Adrenal gland (tissue), 19 donors: ENCODE measurements at regions of chr13 and their contacts with region 1.

Region 1: DNA sequence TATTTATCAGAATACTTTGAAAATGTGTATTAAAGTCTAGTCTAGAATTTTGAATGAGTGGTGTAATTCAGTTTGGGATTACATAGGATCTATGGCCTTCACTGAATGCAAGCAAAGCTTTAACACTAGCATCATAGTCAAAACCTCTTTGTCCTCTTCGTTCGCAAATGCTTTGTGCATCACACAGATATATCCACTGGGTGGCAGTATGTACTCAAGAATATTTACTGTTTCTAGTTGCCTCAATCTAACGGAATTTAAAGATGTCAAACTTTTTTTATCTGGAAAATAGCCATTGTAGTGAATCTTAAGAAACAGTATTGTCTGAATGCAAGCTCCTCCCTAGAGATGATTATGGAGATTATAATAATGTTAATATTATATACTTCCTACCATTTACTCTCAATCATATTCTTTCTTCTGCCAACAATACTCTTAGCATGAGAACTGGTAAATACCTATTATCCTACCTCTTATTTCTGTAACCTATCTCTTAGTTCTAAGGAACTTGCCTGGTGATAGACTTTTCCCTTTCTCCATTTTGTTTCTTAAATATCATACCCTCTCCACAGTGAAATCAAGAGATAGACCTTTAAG is 25.8 kb downstream of the LACC1 start:
- DNase-seq: peak in 4 of 7 donors; percentile 17 to 43 (median 34)
- H3K4me3 ChIP-seq: no peak overlapping the region
- H3K27ac ChIP-seq: no peak overlapping the region
- H3K4me1 ChIP-seq: peaks cover 0 to 5% of the 10 kb centered on the region in 2 donors
- H3K27me3 ChIP-seq: no peaks in the 10 kb centered on the region
- CTCF ChIP-seq: peak; percentile 53 to 91 (median 86)
- POLR2A ChIP-seq: no peak

Region 2: DNA sequence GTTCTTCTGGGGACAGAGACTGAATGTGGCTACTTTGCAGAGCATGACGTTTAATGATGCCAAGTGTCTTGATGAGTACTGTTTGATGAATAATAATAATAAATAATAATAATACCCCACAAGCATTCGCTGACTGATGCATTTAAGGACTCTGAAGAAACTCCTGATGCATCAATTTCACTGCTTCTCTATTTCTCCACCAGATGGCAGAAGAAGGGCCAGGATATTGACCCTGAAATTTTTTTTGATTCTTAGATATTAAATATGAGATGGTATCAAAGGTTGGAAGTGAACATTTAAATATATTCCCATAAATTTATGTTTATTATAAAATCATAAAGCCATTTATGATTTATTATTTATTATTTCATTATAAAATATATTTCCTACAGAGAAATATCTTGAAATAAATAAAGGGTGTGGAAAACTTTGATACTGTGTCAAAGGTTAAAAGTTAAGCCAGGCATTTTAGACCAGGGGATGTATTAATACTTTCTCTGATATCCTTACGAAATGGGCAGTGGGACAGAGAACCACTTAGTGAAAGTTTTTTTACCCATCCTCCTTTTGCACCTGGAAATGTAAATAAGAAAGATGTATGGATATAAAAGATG is 145.0 kb after region 1 on chr13:
- intact Hi-C with region 1: loop called in 1 of 2 experiments (anchors 5 kb)
- DNase-seq: peak in 1 of 7 donors; percentile 11
- H3K4me3 ChIP-seq: no peak overlapping the region
- H3K27ac ChIP-seq: no peak overlapping the region
- H3K4me1 ChIP-seq: no peaks in the 10 kb centered on the region
- H3K27me3 ChIP-seq: peaks cover 5% of the 10 kb centered on the region
- CTCF ChIP-seq: peak; percentile 51 to 88 (median 73)
- POLR2A ChIP-seq: no peak

Region 3: DNA sequence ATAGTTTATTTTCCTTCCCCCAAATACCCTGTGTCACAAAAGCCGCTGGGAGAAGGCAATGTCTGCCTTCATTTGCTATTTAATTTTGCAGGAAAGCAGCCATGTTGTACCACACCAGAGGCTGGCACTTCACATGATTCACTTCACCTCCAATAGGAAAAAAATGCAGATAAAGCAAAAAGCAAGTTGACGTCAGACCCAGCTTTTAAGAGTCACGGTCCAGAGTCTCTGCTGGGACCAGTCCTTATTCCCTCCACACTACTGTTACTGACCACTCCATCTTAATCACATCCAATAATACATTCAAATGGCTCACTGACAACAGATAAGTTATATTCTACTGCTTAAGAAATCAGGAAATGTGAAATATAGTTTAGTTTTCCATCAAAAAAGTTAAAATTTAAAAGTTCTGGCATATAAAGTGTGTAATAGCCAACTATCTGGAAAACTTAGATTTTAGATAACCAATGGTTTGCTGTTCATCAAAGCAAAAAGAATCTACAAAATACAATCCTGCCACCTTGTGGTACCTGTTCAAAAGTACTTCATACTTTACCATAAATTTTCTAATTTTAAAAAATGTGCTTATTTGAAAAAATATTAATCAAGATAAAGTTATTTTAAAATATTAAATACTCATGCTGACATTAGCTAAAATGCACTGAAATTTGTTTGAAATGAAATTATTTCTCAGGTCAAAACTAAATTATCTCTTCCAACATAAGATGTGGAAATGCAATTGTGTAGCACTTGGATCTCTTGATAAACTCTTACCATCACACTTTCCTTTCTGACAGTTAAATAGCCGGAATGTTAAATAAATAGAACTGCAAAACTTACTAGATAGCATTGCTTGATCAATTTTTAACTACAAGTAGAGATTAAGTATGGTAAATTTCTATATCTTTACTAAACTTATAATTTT is 565.4 kb after region 1 on chr13:
- intact Hi-C with region 1: loop called (anchors 10 kb)
- DNase-seq: no peak
- H3K4me3 ChIP-seq: no peak overlapping the region
- H3K27ac ChIP-seq: no peak overlapping the region
- H3K4me1 ChIP-seq: peaks cover 0 to 11% of the 10 kb centered on the region in 2 donors
- H3K27me3 ChIP-seq: no peaks in the 10 kb centered on the region
- CTCF ChIP-seq: peak; percentile 29 to 67 (median 46)
- POLR2A ChIP-seq: no peak